ENCODE measurements at regions of chr11 and their contacts with region 1.

Region 1: DNA sequence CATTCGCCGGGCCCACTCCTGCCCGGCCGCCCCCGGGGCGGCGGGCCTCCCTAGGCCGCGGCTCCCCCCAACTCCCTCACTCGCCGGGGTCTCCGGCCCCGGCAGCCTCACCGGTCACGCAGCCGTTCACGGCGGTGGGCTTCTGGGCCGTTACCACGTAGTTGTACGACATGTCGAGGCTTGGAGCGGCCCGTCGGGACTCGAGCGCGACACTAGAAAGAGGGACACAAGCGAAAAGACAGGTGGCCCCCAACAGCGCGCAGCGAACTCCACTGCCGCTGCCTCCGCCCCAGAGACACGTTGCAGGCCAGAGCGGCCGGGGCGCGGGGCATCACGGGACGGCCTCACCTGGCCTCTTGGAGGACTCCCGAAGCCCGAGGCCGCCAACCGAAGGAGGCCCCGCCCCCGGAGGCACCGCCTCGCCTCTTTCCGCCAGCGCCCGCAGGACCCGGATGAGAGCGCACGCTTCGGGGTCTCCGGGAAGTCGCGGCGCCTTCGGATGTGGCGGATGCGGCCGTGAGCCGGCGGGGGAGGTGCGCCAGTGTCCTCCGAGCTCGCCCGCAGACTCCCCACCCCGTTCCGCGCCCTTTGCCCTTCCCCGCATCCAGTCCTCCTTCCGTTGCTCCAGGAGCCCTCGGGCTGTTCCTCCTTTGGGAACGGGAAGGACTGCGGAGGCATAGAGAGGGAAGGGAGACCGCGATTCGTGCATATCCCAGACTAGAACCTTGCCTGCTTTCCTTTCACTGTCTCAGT is at the starts of genes DDB1 and TKFC:
- DNase-seq: peak; percentile 98
- H3K4me3 ChIP-seq: peak within 1 kb of the TSS; percentile 94
- H3K27ac ChIP-seq: peak within 1 kb of the TSS; percentile 87
- H3K4me1 ChIP-seq: peaks cover 10% of the 10 kb centered on the region
- H3K27me3 ChIP-seq: no peaks in the 10 kb centered on the region
- CTCF ChIP-seq: no peak
- total RNA-seq, gene DDB1: 305 and 307 TPM in 2 replicates
- total RNA-seq, gene TKFC: 82.3 and 94.2 TPM in 2 replicates

Region 2: DNA sequence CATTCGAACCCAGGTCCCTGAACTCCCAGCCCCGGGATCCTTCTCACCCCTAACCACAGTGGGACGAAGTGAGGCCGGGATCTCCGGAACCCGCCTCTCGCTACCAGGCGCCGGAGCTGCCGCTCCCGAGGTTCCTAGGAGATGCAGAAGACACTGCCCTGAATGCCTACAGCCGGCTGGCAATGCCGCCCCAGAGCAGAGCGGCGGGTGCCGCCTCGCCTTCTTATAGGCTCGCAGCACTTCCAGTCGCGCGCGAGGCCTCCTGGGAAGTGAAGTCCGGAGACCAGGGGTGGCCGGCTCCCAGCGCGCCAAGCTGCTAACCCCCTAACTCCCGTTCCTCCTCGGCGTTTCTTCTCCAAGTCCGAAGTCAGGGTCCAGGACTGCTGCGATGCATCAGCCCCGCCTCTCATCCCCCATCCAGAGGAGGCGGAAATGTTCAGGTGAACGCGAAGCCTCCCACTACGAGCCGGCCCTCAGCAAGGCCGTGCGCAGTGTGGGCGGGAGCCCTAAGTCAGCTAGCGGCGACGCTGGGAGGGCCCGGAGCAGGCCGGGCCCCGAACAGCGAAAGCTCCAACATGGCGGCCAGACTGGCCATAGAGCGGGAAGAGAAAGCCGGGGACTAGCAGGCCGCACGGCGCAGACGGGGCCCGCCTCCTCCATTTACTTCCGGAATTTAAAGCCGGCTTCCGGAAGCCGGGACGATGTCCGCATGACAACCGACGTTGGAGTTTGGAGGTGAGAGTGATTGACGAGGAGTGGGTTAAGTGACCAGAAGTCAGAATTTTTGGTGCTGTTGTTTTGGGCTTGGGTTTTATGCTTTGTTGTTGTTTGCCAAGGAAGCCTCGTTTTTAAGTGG is 28.9 kb after region 1 on chr11 and contains the starts of genes CYB561A3 and TMEM138:
- CTCF ChIA-PET with region 1: interaction called, 12 read pairs
- POLR2A ChIA-PET with region 1: interaction called, 4 read pairs
- intact Hi-C with region 1: no loop called
- DNase-seq: peak; percentile 98
- H3K4me3 ChIP-seq: peak within 1 kb of the TSS; percentile 72
- H3K27ac ChIP-seq: peak within 1 kb of the TSS; percentile 99
- H3K4me1 ChIP-seq: peaks cover 15% of the 10 kb centered on the region
- H3K27me3 ChIP-seq: no peaks in the 10 kb centered on the region
- CTCF ChIP-seq: no peak
- total RNA-seq, gene CYB561A3: 42.1 and 54.7 TPM in 2 replicates
- total RNA-seq, gene TMEM138: 58.8 and 82.8 TPM in 2 replicates

Region 3: GRCh38 chr11:61384271-61385242 is 51.6 kb after region 1 on chr11:
- CTCF ChIA-PET with region 1: interaction called, 54 read pairs
- POLR2A ChIA-PET with region 1: no interaction called
- intact Hi-C with region 1: loop called (anchors 1 kb)
- DNase-seq: peak; percentile 50
- H3K4me3 ChIP-seq: no peak overlapping the region
- H3K27ac ChIP-seq: no peak overlapping the region
- H3K4me1 ChIP-seq: no peaks in the 10 kb centered on the region
- H3K27me3 ChIP-seq: no peaks in the 10 kb centered on the region
- CTCF ChIP-seq: peak; percentile 45

Region 4: DNA sequence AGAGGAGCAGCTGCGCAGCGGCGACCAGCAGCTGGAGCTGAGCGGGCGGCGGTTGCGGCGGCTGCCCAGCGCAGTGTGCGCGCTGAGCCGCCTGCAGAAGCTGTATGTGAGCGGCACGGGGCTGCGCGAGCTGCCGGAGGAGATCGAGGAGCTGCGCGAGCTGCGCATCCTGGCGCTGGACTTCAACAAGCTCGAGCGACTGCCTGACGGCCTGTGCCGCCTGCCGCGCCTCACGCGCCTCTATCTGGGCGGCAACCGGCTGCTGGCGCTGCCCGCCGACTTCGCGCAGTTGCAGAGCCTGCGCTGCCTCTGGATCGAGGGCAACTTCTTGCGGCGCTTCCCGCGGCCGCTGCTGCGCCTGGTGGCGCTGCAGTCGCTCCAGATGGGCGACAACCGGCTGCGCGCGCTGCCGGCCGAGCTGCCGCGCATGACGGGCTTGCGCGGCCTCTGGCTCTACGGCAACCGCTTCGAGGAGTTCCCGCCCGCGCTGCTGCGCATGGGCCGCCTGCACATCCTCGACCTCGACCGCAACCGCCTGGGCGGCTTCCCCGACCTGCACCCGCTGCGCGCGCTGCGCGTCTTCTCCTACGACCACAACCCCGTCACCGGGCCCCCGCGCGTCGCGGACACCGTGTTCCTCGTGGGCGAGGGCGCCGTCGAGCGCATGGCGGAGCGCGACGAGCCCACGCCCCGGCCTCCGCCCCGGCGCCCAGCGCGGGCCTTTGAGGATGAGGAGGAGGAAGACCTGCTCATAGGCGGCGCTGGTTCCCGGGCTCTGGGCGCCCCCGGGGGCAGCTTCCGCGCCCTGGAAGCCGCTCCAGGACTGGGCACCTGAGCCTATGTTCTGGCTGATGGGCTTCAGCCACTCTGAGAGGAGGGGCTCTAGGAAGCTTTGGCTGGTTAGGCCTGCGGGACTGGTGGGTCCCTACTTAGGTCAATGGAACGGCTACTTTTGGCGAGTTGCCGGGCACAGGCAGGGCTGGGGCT is 176.4 kb after region 1 on chr11:
- CTCF ChIA-PET with region 1: no interaction called
- POLR2A ChIA-PET with region 1: no interaction called
- intact Hi-C with region 1: loop called (anchors 2 kb)
- DNase-seq: peak; percentile 97
- H3K4me3 ChIP-seq: peak overlapping the region; percentile 53
- H3K27ac ChIP-seq: peak overlapping the region; percentile 80
- H3K4me1 ChIP-seq: peaks cover 81% of the 10 kb centered on the region
- H3K27me3 ChIP-seq: no peaks in the 10 kb centered on the region
- CTCF ChIP-seq: peak; percentile 77